ENCODE measurements at regions of chr11 and their contacts with region 1.

Region 1: GRCh38 chr11:45298718-45299117 is 12.6 kb upstream of the SYT13 start:
- DNase-seq: no peak
- ATAC-seq: no peak
- H3K4me3 ChIP-seq: no peak overlapping the region
- H3K27ac ChIP-seq: no peak overlapping the region
- H3K4me1 ChIP-seq: no peaks in the 10 kb centered on the region
- H3K27me3 ChIP-seq: peaks cover 15% of the 10 kb centered on the region
- CTCF ChIP-seq: no peak
- POLR2A ChIP-seq: no peak
- RAD21 ChIP-seq: no peak

Region 2: DNA sequence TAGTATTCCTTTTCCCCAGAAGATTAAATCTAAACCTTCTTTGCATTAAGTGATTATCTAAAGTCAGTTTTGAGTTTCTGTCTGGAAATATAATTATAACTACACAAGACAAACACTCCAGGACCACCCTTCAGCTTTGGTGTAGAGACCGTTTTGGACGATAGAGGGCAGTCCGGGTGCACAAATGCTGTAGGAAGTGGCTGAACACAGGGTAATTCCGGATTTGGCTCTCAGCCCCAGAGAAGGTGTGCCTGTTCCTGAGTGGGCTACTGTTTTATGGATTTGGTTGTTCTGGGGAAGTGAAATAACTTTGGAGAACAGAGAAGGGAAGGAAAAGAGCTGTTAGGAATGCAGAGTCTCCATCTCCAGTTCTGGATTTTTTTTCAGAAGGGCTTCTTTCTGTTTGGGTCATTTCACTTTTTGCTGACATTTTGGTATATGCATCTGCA is 1188.5 kb before region 1 on chr11:
- CTCF ChIA-PET with region 1: no interaction called
- POLR2A ChIA-PET with region 1: no interaction called
- dilution Hi-C with region 1: no loop called
- in situ Hi-C with region 1: no loop called
- intact Hi-C with region 1: no loop called
- DNase-seq: peak; percentile 40
- ATAC-seq: peak; percentile 86
- H3K4me3 ChIP-seq: no peak overlapping the region
- H3K27ac ChIP-seq: no peak overlapping the region
- H3K4me1 ChIP-seq: no peaks in the 10 kb centered on the region
- H3K27me3 ChIP-seq: no peaks in the 10 kb centered on the region
- CTCF ChIP-seq: peak; percentile 75
- POLR2A ChIP-seq: no peak
- RAD21 ChIP-seq: peak; percentile 79

Region 3: DNA sequence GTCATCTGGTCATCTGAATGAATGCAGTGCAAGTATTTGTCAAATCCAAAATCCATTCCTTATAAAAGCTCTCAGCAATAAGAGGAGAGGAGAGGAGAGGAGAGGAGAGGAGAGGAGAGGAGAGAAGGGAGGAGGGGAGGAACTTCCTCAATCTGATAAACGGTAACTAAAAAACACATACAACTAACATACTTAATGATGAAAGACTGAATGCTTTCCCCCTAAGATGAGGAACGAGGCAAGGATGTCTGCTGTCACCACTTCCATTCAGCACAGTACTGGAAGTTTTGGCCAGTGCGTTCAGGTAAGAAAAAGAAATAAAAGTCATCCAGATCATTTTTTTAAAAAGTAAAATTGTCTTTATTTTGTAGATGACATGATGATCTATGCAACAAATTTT is 652.9 kb before region 1 on chr11:
- CTCF ChIA-PET with region 1: no interaction called
- POLR2A ChIA-PET with region 1: no interaction called
- dilution Hi-C with region 1: no loop called
- in situ Hi-C with region 1: no loop called
- intact Hi-C with region 1: loop called (anchors 10 kb)
- DNase-seq: no peak
- ATAC-seq: no peak
- H3K4me3 ChIP-seq: no peak overlapping the region
- H3K27ac ChIP-seq: no peak overlapping the region
- H3K4me1 ChIP-seq: no peaks in the 10 kb centered on the region
- H3K27me3 ChIP-seq: peaks cover 3% of the 10 kb centered on the region
- CTCF ChIP-seq: no peak
- POLR2A ChIP-seq: no peak
- RAD21 ChIP-seq: no peak

Region 4: DNA sequence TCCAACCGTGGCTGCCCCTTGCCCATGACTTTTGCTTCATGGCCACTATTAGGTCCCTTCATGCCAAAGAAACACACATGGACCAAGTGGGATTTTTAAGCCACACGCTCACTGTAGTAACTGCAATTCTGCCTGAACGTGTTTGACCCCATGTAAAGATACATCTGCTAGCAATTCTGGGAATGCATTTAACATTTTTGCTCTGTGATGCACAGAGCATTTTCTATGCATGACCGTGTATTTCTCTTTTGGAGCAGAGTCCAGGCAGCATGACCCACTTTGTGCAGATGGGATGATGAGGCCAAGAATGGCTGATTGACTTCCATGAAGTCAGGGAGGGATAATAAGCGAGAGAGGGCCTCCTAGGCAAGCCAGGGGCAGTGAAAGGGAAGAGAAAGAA is 456.5 kb before region 1 on chr11:
- CTCF ChIA-PET with region 1: no interaction called
- POLR2A ChIA-PET with region 1: no interaction called
- dilution Hi-C with region 1: no loop called
- in situ Hi-C with region 1: no loop called
- intact Hi-C with region 1: no loop called
- DNase-seq: peak; percentile 96
- ATAC-seq: peak; percentile 88
- H3K4me3 ChIP-seq: no peak overlapping the region
- H3K27ac ChIP-seq: peak overlapping the region; percentile 93
- H3K4me1 ChIP-seq: peaks cover 16% of the 10 kb centered on the region
- H3K27me3 ChIP-seq: no peaks in the 10 kb centered on the region
- CTCF ChIP-seq: no peak
- POLR2A ChIP-seq: no peak
- RAD21 ChIP-seq: peak; percentile 24